ENCODE measurements at regions of chr2 and their contacts with region 1.

Region 1: GRCh38 chr2:20035955-20036666 is 15.3 kb downstream of the LAPTM4A start:
- DNase-seq: no peak
- ATAC-seq: no peak

Region 2: GRCh38 chr2:19764998-19765397 is 271.1 kb before region 1 on chr2:
- intact Hi-C with region 1: no loop called
- DNase-seq: no peak
- ATAC-seq: no peak

Region 3: GRCh38 chr2:19835781-19836281 is 200.3 kb before region 1 on chr2:
- intact Hi-C with region 1: no loop called
- DNase-seq: no peak
- ATAC-seq: peak; percentile 84

Region 4: DNA sequence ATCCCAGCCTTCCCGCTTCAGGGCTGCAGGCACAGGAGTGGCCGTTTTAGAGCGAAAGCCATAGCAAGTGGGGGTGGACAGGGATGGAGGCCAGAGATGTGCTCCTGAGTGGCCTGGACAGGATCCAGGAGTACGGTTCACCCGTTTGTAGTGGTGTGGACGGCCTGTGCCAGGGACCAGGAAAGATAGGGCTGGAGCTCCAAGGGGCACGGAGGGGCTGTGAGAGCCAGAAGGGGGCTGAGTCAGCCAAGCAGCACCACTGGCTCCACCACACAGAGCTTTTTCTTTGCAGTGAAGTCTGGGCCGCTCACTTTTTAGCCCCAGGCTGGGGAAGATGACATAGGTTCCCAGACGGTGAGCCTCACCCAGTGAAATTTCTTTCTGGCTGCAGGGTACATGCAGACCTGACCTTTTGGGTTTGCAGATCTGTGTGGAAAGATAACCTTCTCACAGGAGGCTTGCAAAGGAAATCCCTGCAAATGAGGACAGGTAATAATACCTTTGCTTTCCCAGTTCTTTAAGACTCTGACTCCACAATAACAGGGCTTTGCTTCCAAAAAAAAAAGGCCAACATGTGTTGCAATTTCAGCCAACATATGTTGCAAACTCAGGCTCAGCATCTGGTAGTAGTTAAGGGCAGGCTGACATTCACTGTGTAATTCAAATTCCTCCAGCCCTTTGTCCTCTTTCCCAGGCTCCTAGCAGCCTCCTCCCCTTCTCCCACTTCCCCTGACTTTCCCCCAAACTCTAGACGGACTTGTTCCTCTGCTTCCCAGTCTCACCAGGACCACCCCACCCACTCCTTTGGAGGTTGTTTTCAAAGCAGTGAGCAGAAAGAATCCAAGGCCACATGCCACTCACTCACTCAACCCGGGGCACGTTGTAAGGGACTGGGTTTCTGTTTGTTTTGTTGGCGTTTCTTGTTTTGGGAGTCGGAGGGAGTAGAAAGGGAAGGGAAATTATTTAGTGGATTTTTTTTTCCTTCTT is 35.6 kb after region 1 on chr2:
- intact Hi-C with region 1: loop called (anchors 5 kb)
- DNase-seq: peak; percentile 84
- ATAC-seq: peak; percentile 91

Measured in Right ventricle myocardium inferior (tissue), 1 donor.